K562 (cell line): ENCODE measurements at regions of chr20 and their contacts with region 1.

Region 1: DNA sequence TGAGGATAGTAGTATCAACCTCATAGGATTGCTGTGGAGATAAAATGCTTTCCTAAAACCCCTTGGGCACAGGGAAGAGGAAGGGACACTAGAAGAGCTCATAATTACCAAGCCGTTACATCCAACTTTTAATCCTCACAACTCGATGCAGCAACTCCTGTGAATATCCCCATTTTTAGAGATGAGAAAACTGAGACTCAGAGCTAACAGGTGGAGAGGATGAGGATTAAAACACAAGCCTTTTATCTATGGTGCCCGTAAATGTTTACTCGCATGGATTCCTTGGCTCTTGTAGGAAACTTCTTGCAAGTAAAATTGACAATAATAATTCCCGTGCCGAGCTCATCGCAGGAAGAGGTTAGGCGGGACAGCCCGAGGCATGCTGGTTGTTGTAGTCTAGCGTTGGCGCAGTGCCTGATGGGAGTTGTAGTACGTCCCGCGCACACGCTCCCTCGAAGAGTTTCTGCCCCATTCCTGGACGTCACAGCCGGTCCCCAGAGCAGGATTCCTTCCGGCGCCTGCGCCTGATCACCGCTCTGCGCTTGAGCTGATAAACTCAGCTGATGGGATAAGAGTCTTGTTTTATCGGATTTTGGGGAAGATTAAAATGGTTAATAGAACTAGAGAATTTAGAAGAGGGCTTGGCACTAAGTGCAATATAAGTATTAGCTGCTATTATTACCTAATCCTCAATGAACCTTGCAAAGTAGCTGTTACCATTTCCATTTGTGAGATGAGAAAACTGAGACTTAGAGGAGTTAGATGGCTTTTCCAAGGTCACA is 2.8 kb upstream of the UBE2V1 start:
- DNase-seq: peak; percentile 85 to 97 (median 89)
- ATAC-seq: peak; percentile 83
- H3K4me3 ChIP-seq: peak overlapping the region; percentile 63
- H3K27ac ChIP-seq: peak overlapping the region; percentile 75
- H3K4me1 ChIP-seq: peaks cover 23 to 34% of the 10 kb centered on the region in 2 experiments
- H3K27me3 ChIP-seq: no peaks in the 10 kb centered on the region
- CTCF ChIP-seq: no peak
- EP300 ChIP-seq: no peak; the same call in 1 of the 2 replicates
- POLR2A ChIP-seq: peak; percentile 75
- RAD21 ChIP-seq: no peak

Region 2: DNA sequence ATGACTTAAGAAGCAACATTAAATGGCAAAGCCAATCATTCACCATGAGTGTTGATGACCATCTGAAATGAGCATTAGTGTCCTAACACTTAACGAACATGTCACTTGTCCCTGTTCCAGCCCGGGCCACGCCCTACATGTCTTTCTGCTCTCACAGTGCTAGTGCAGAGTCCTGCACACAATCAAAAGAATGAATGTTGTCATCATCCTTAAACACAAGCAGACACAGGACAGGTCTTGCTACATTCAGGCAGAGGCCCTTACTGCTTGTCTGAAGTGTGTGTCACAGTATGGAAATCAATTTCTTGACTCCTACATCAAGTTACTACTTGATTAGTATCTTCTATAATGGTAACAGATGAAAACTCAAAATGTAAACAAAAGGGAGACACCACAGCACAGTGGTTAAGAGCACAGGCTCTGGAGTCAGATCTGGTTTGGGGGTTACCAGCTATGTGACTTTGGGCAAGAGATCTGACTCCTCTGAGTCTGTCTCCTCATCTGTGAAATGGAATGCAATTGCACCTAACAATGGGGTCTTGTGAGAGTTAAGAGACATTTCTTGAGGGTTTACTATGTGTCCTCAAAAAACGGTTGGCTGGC is 20.2 kb before region 1 on chr20:
- CTCF ChIA-PET with region 1: no interaction called
- POLR2A ChIA-PET with region 1: interaction called, 51 read pairs
- in situ Hi-C with region 1: no loop called
- intact Hi-C with region 1: no loop called
- DNase-seq: no peak
- ATAC-seq: no peak
- H3K4me3 ChIP-seq: no peak overlapping the region
- H3K27ac ChIP-seq: no peak overlapping the region
- H3K4me1 ChIP-seq: peaks cover 13 to 36% of the 10 kb centered on the region in 2 experiments
- H3K27me3 ChIP-seq: no peaks in the 10 kb centered on the region
- CTCF ChIP-seq: no peak
- EP300 ChIP-seq: no peak
- POLR2A ChIP-seq: no peak
- RAD21 ChIP-seq: no peak

Region 3: DNA sequence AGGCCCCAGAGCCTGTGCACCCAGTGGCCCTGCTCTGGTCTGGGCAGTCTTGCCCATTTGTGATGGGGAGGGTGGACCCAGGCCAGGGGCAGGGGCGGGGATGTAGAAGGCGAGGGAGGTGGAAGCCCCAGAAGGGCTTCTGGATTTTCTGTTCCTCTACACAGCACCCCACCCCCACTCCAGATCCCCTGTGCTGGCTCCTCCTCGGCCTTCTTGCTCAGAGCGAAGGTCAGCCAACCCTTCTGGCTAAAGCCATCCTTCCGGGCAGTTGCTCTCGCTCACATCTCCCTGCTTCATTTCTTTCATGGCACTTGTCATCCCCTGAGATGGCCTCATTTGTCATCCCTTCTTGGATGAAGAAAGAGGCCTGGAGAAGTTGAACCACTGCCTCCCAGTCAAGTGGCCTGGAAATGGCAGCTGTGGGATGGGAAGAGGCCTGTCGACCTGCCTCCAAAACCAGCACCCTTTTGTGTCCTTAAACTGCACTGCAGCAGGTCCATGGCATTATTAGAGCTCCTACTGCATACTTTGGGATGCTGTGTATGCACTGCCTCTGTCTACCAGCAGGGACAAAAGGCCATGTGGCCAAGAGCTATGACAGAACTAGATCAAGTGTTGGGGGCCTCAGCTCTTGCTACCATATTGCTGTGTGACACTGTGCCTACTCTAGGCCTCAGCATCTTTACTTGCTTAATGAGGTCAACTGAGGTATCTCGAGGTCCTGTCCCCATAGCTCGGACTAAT is 17.9 kb after region 1 on chr20:
- CTCF ChIA-PET with region 1: no interaction called
- POLR2A ChIA-PET with region 1: interaction called, 24 read pairs
- in situ Hi-C with region 1: no loop called
- intact Hi-C with region 1: no loop called
- DNase-seq: no peak
- ATAC-seq: no peak
- H3K4me3 ChIP-seq: no peak overlapping the region
- H3K27ac ChIP-seq: no peak overlapping the region
- H3K4me1 ChIP-seq: peaks cover 4 to 27% of the 10 kb centered on the region in 2 experiments; a peak in 4 of 5 replicates
- H3K27me3 ChIP-seq: no peaks in the 10 kb centered on the region
- CTCF ChIP-seq: 0 out of 6 replicates have a peak, but pooled peaks of 2 of the 3 experiments have one; percentile 10 to 28
- EP300 ChIP-seq: no peak
- POLR2A ChIP-seq: no peak
- RAD21 ChIP-seq: no peak

Region 4: GRCh38 chr20:50153485-50154377 is 37.9 kb after region 1 on chr20 and contains the start of gene PEDS1:
- CTCF ChIA-PET with region 1: no interaction called
- POLR2A ChIA-PET with region 1: interaction called, 22 read pairs
- in situ Hi-C with region 1: no loop called
- intact Hi-C with region 1: loop called (anchors 2 kb)
- DNase-seq: peak; percentile 93 to 98 (median 98)
- ATAC-seq: peak; percentile 97
- H3K4me3 ChIP-seq: peak within 1 kb of the TSS; percentile 93
- H3K27ac ChIP-seq: peak within 1 kb of the TSS; percentile 92
- H3K4me1 ChIP-seq: peaks cover 27 to 52% of the 10 kb centered on the region in 2 experiments
- H3K27me3 ChIP-seq: no peaks in the 10 kb centered on the region
- CTCF ChIP-seq: no peak
- EP300 ChIP-seq: no peak
- POLR2A ChIP-seq: peak; percentile 84
- RAD21 ChIP-seq: no peak
- polyA plus RNA-seq, gene PEDS1: 2.9 to 3.9 TPM